Calu3 (cell line): ENCODE measurements at regions of chr22 and their contacts with region 1.

Region 1: DNA sequence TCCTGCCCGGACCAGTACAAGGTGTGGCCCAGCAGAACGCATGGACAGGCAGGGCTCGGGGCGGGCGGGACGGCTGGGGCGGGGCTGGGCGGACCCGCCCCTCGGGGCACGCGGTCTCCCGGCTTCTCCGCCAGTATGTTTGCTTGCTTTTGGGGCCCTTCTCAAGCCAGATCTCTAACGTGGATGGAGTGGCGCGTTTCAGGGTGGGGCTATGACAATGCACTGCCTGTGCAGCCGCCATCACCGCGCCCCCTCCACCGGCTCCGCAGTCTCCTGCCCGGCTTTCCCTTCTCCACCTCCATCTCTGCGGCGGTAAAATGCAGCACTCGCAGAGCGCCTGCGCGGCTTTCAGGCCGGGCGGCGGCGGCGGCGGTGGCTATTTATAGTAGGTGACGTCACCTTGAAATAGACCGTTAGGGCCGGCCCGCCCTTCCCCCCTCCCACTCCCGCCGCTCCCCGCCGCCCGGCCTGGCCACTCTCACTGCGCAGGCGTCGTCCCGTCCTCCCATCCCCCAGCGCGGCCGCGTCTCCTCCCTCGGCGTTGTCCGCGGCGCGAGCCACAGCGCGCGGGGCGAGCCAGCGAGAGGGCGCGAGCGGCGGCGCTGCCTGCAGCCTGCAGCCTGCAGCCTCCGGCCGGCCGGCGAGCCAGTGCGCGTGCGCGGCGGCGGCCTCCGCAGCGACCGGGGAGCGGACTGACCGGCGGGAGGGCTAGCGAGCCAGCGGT is at the start of gene YWHAH:
- DNase-seq: peak; percentile 96
- H3K4me3 Mint-ChIP-seq: no peak within 1 kb of the TSS
- H3K27ac Mint-ChIP-seq: peak within 1 kb of the TSS; percentile 59
- H3K4me1 Mint-ChIP-seq: no peaks in the 10 kb centered on the region
- H3K27me3 Mint-ChIP-seq: no peaks in the 10 kb centered on the region
- CTCF ChIP-seq: no peak
- total RNA-seq, gene YWHAH: 179 and 197 TPM in 2 replicates

Region 2: GRCh38 chr22:31661851-31662656 is 282.1 kb before region 1 on chr22 and contains the start of gene PISD:
- CTCF ChIA-PET with region 1: interaction called, 5 read pairs
- intact Hi-C with region 1: loop called (anchors 5 kb)
- DNase-seq: peak; percentile 97
- H3K4me3 Mint-ChIP-seq: peak within 1 kb of the TSS; percentile 93
- H3K27ac Mint-ChIP-seq: peak within 1 kb of the TSS; percentile 99
- H3K4me1 Mint-ChIP-seq: peaks cover 25% of the 10 kb centered on the region
- H3K27me3 Mint-ChIP-seq: no peaks in the 10 kb centered on the region
- CTCF ChIP-seq: no peak
- total RNA-seq, gene PISD: 45.9 and 53.4 TPM in 2 replicates

Region 3: DNA sequence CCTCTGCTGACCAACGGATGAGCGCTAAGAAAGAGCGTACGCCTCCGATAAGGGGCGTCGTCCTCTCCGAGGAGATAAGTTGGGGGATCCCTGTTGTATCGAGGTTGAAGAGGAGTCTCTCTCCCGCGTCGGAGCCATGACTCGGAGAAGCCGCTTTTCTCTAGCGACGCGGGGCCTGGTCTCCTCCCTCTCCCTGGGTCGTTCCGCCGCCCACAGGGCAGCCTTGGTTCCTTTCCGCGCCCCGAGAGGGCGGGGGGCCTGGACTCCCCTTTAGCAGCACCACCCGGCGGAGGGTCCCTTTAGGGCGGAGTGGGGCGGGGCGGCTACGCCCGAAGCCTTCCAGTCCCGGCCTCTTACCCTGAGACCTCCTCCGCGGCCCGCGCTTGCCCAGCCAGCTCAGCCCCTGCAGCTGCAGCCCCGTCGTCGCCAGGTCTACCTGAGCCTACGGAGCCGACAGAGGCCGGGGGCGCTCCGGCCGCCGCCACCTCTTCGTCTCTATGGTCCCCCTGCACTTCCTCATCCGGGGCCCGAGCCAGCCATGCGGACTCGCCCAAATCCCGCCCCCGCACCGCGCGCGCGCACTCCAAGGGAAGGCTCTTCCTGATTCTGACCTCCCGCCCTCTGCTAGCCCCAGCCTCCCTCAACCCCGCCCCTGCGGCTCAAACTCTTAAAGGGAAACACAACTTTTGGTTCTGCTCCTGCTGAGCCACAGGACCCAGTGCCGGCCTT is 194.3 kb before region 1 on chr22 and contains the start of gene PRR14L:
- CTCF ChIA-PET with region 1: interaction called, 3 read pairs
- intact Hi-C with region 1: loop called (anchors 5 kb)
- DNase-seq: peak; percentile 98
- H3K4me3 Mint-ChIP-seq: peak within 1 kb of the TSS; percentile 83
- H3K27ac Mint-ChIP-seq: peak within 1 kb of the TSS; percentile 77
- H3K4me1 Mint-ChIP-seq: peaks cover 33% of the 10 kb centered on the region
- H3K27me3 Mint-ChIP-seq: no peaks in the 10 kb centered on the region
- CTCF ChIP-seq: no peak
- total RNA-seq, gene PRR14L: 56.3 and 60.5 TPM in 2 replicates

Region 4: GRCh38 chr22:31872209-31872608 is 71.9 kb before region 1 on chr22:
- CTCF ChIA-PET with region 1: interaction called, 4 read pairs
- intact Hi-C with region 1: loop called (anchors 5 kb)
- DNase-seq: peak; percentile 2
- H3K4me3 Mint-ChIP-seq: no peak overlapping the region
- H3K27ac Mint-ChIP-seq: no peak overlapping the region
- H3K4me1 Mint-ChIP-seq: no peaks in the 10 kb centered on the region
- H3K27me3 Mint-ChIP-seq: no peaks in the 10 kb centered on the region
- CTCF ChIP-seq: no peak

Region 5: GRCh38 chr22:31891366-31892079 is 52.6 kb before region 1 on chr22:
- CTCF ChIA-PET with region 1: no interaction called
- intact Hi-C with region 1: loop called (anchors 10 kb)
- DNase-seq: no peak
- H3K4me3 Mint-ChIP-seq: no peak overlapping the region
- H3K27ac Mint-ChIP-seq: no peak overlapping the region
- H3K4me1 Mint-ChIP-seq: no peaks in the 10 kb centered on the region
- H3K27me3 Mint-ChIP-seq: no peaks in the 10 kb centered on the region
- CTCF ChIP-seq: no peak

Region 6: DNA sequence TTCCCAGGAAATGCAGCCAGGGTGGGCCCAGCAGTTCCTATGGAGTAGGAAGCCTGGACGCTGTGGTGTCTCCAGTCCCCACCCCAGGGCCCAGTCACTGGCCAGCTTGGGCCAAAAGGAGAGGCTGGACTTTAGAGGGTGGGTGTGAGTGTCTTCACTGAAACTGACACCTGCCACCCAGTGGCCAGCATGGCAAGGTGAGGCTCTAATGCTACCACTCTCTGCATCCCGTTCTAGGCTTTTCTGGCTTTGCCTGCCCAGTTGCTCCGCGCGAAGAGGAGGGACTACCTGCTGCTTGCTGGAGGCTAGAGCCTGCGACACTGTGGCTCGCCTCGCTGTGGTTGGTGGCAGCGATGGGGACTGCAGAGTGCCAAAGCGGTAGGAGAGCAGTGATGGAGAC is 179.5 kb after region 1 on chr22:
- CTCF ChIA-PET with region 1: no interaction called
- intact Hi-C with region 1: no loop called
- DNase-seq: peak; percentile 45
- H3K4me3 Mint-ChIP-seq: no peak overlapping the region
- H3K27ac Mint-ChIP-seq: no peak overlapping the region
- H3K4me1 Mint-ChIP-seq: no peaks in the 10 kb centered on the region
- H3K27me3 Mint-ChIP-seq: peaks cover 15% of the 10 kb centered on the region
- CTCF ChIP-seq: no peak